Calu3 (cell line): ENCODE measurements at regions of chr12 and their contacts with region 1.

Region 1: GRCh38 chr12:25386831-25387731 is 136.4 kb upstream of the KRAS start:
- DNase-seq: peak; percentile 83
- H3K4me3 Mint-ChIP-seq: peak overlapping the region; percentile 88
- H3K27ac Mint-ChIP-seq: peak overlapping the region; percentile 96
- H3K4me1 Mint-ChIP-seq: peaks cover 9% of the 10 kb centered on the region
- H3K27me3 Mint-ChIP-seq: no peaks in the 10 kb centered on the region
- CTCF ChIP-seq: peak; percentile 67

Region 2: DNA sequence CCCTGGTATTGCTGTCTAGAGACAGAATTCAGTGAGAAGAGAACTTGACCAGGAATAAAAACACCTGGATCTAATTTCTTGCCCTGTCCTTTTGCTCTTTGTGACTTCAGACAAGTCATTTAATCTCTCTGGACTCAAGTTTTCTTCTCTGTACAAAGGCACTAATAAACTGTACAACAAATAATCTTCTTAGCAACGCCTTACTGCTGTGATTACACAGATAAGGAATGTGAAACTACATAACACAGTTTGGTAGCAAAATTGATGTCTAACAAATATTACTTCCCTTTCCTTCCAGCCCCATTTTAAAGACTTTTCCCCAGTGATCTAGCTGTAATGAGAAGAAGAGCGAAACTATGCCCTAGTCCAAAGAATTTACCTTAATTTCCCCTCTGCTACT is 507.4 kb before region 1 on chr12:
- CTCF ChIA-PET with region 1: no interaction called
- intact Hi-C with region 1: no loop called
- DNase-seq: no peak
- H3K4me3 Mint-ChIP-seq: no peak overlapping the region
- H3K27ac Mint-ChIP-seq: no peak overlapping the region
- H3K4me1 Mint-ChIP-seq: no peaks in the 10 kb centered on the region
- H3K27me3 Mint-ChIP-seq: no peaks in the 10 kb centered on the region
- CTCF ChIP-seq: no peak

Region 3: GRCh38 chr12:24909667-24910066 is 477.4 kb before region 1 on chr12:
- CTCF ChIA-PET with region 1: no interaction called
- intact Hi-C with region 1: no loop called
- DNase-seq: no peak
- H3K4me3 Mint-ChIP-seq: no peak overlapping the region
- H3K27ac Mint-ChIP-seq: no peak overlapping the region
- H3K4me1 Mint-ChIP-seq: no peaks in the 10 kb centered on the region
- H3K27me3 Mint-ChIP-seq: no peaks in the 10 kb centered on the region
- CTCF ChIP-seq: no peak

Region 4: GRCh38 chr12:24991209-24992049 is 395.7 kb before region 1 on chr12:
- CTCF ChIA-PET with region 1: interaction called, 9 read pairs
- intact Hi-C with region 1: loop called (anchors 1 kb)
- DNase-seq: peak; percentile 8
- H3K4me3 Mint-ChIP-seq: no peak overlapping the region
- H3K27ac Mint-ChIP-seq: no peak overlapping the region
- H3K4me1 Mint-ChIP-seq: no peaks in the 10 kb centered on the region
- H3K27me3 Mint-ChIP-seq: peaks cover 34% of the 10 kb centered on the region
- CTCF ChIP-seq: peak; percentile 20

Region 5: DNA sequence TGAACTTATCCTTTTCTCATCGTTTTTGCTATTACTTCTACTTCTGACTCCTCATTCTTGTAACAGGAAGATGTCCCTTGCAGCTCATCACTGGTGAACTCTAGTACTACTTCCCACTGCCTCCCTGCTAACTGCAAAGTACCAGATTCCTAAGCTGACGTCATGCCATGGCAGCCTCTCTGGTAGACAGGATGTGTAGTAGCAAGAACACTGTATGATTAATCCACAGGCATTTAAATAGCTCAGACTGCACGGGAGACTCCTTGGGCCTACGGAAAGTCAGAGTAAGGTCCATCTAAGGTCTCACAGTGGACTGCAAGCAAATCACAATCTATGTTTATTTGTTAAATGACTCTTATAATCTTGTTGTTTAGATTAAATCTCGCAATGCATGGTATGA is 235.6 kb before region 1 on chr12:
- CTCF ChIA-PET with region 1: interaction called, 10 read pairs
- intact Hi-C with region 1: loop called (anchors 1 kb)
- DNase-seq: peak; percentile 7
- H3K4me3 Mint-ChIP-seq: no peak overlapping the region
- H3K27ac Mint-ChIP-seq: no peak overlapping the region
- H3K4me1 Mint-ChIP-seq: no peaks in the 10 kb centered on the region
- H3K27me3 Mint-ChIP-seq: no peaks in the 10 kb centered on the region
- CTCF ChIP-seq: no peak

Region 6: GRCh38 chr12:25186788-25187397 is 200.2 kb before region 1 on chr12:
- CTCF ChIA-PET with region 1: no interaction called
- intact Hi-C with region 1: no loop called
- DNase-seq: no peak
- H3K4me3 Mint-ChIP-seq: peak overlapping the region; percentile 10
- H3K27ac Mint-ChIP-seq: peak overlapping the region; percentile 60
- H3K4me1 Mint-ChIP-seq: peaks cover 11% of the 10 kb centered on the region
- H3K27me3 Mint-ChIP-seq: no peaks in the 10 kb centered on the region
- CTCF ChIP-seq: no peak

Region 7: GRCh38 chr12:25208554-25208953 is 178.5 kb before region 1 on chr12:
- CTCF ChIA-PET with region 1: interaction called, 3 read pairs
- intact Hi-C with region 1: loop called (anchors 1 kb)
- DNase-seq: no peak
- H3K4me3 Mint-ChIP-seq: no peak overlapping the region
- H3K27ac Mint-ChIP-seq: no peak overlapping the region
- H3K4me1 Mint-ChIP-seq: peaks cover 6% of the 10 kb centered on the region
- H3K27me3 Mint-ChIP-seq: no peaks in the 10 kb centered on the region
- CTCF ChIP-seq: no peak

Region 8: DNA sequence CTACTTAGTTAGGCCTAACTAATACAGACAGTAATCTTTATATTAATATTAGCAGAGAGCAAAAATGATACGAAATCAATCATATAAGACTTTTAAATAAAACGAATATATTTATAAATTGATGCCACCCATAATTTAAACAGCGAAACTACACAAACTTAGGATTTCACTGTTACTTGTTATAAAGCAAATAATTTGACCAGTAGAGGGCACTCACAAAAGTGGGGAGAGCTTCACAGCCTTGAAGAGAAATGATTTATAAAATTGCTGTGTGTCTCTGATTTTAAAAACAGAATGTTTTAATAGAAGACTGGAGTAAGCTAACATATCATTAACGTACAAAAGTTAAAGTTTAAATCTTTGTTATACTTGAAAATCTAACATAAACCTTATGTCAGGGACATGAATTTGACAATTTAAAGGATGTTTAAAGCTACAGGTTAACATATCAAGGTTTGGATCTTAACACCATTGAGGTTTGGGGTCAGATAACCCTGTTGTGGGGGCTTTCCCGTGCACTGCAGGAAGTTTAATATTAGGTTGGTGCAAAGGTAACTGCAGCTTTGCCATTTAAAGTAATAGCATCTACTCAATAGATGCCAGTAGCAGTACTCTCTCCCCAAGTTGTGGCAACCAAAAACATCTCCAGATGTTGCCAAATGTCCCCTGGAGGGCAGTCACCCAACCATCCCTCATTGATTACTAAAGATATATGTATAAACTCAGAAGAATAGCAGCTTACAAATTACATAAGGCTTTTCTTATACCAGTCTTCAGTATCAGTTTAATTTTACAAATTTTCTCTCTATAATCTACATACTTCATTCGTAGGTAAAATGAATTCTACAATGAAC is 145.7 kb before region 1 on chr12:
- CTCF ChIA-PET with region 1: interaction called, 3 read pairs
- intact Hi-C with region 1: loop called (anchors 1 kb)
- DNase-seq: no peak
- H3K4me3 Mint-ChIP-seq: no peak overlapping the region
- H3K27ac Mint-ChIP-seq: no peak overlapping the region
- H3K4me1 Mint-ChIP-seq: peaks cover 8% of the 10 kb centered on the region
- H3K27me3 Mint-ChIP-seq: no peaks in the 10 kb centered on the region
- CTCF ChIP-seq: peak; percentile 12

Region 9: DNA sequence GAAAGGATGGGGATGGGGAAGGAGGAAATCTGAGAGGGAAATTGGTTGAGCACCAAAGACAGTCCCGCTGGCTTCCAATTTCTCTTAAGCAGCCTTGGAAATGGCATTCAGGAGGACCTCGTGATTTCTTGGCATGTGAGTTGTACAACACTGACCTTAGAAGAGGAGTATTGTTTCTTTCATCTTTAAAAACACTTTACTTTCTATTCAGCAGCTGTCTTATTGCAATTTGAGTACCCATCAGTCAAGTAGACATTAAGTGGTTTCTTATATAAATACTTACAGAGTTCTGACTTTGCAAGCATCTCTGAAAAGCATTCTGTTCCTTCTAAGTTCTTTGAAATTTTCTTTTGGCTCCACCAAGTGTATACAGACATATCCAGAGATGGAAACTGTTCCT is 82.8 kb after region 1 on chr12:
- CTCF ChIA-PET with region 1: no interaction called
- intact Hi-C with region 1: no loop called
- DNase-seq: no peak
- H3K4me3 Mint-ChIP-seq: no peak overlapping the region
- H3K27ac Mint-ChIP-seq: no peak overlapping the region
- H3K4me1 Mint-ChIP-seq: no peaks in the 10 kb centered on the region
- H3K27me3 Mint-ChIP-seq: no peaks in the 10 kb centered on the region
- CTCF ChIP-seq: no peak